Transverse colon (tissue), 4 donors: ENCODE measurements at regions of chrX and their contacts with region 1.

Region 1: DNA sequence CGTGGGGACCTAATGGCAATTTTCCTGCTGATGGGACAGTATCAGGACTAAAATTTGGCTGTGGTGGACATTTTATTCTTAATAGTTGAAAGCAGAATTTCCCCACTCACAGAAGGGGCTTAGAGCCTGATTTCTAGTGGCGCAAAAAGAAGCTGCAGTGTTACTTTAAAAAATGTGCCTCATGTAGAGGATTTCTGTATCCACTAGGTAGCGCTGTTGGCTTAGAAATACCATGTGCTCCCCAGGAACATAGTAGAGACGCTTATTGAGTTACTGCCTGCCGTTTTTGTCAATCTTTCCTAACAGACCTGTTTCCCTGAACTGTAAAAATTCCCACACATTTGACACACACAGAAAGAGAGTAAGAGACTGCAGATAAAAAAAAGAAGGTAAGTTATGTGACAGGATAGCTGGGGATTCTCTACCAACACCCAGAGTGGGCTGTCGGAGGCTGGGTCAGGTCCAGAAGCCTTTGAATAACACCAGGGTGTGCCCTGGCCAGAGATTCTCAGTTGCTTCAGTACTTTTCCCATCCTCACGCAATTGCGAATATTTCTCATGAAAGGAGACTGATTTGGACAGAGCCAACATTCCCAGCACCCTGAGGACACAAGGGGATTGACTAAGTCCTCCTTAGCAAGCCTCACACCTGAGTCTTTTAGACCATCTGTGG is 88.4 kb downstream of the ZXDA start:
- DNase-seq: peak; percentile 8
- H3K4me3 ChIP-seq: no peak overlapping the region
- H3K27ac ChIP-seq: no peak overlapping the region
- H3K4me1 ChIP-seq: no peaks in the 10 kb centered on the region
- H3K27me3 ChIP-seq: no peaks in the 10 kb centered on the region
- CTCF ChIP-seq: peak; percentile 48 to 69 (median 69)
- EP300 ChIP-seq: no peak
- POLR2A ChIP-seq: no peak

Region 2: DNA sequence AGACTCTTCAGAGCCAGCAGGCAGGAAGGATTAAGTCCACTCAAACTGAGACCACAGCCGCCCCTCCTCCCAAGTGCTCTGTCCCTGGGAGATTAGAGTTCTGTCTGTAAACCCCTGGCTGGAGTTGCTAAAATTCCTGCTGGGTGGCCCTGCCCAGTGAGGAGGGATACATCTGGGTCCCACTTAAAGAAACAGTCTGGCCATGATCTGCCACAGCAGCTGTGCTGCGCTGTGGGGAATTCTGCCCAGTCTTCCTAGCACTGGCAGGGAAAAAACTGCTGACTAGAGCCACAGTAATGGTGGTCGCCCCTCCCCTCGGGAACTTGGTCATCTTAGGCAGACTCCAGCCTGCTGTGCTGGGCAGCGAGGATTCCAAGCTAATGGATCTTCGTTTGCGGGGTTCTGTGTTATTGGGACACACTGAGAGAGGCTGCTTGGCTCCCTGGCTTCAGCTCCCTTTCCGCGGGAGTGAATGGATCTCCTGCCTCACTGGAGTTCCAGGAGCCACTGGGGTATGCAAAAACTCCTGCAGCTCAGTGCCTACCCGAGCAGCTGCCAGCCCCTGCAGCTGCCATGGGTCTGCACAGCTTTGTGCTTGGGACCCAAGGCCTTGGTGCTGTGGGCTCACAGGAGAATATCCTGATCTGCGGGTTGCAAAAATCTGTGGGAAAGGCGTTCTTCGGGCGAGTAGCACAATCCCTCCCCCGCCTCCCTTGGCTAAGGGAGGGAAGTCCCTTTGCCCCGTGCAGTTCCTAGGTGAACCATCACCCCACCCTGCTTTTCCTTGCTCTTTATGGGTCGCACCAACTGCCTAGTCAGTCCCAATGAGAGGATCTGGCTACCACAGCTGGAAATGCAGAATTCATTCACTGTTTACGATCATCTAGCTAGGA is 214.3 kb before region 1 on chrX:
- in situ Hi-C with region 1: no loop called
- intact Hi-C with region 1: no loop called
- DNase-seq: no peak
- H3K4me3 ChIP-seq: no peak overlapping the region
- H3K27ac ChIP-seq: no peak overlapping the region
- H3K4me1 ChIP-seq: no peaks in the 10 kb centered on the region
- H3K27me3 ChIP-seq: no peaks in the 10 kb centered on the region
- CTCF ChIP-seq: no peak
- EP300 ChIP-seq: no peak
- POLR2A ChIP-seq: no peak

Region 3: DNA sequence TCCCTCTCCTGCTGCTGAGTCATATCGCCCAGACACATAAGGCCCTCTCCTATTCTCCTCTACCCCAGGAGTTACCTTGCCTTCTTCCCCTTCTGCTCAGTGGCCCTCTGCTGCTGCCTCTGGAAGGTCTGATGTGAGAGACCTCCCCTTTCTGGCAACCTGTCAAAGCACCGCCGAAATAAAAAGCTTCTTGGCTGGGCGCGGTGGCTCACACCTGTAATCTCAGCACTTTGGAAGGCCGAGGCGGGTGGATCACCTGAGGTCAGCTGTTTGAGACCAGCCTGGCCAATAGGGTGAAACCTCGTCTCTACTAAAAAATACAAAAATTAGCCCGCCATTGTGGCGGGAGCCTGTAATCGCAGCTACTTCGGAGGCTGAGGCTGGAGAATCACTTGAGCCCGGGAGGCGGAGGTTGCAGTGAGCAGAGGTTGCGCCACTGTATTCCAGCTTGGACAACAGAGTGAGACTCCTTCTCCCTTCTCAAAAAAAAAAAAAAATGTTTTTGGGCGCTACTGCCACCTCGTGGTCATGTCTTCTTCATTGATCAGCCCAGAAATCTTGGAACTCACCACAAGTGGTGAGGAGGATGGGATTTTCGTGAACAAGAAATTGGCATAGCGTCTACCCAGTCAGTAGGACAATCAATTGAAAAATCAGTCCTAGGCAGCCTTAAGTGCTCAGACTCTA is 97.1 kb after region 1 on chrX:
- in situ Hi-C with region 1: loop called in 2 of 4 experiments (anchors 10 to 25 kb)
- intact Hi-C with region 1: loop called (anchors 5 kb)
- DNase-seq: peak; percentile 27
- H3K4me3 ChIP-seq: no peak overlapping the region
- H3K27ac ChIP-seq: no peak overlapping the region
- H3K4me1 ChIP-seq: no peaks in the 10 kb centered on the region
- H3K27me3 ChIP-seq: no peaks in the 10 kb centered on the region
- CTCF ChIP-seq: peak; percentile 28 to 53 (median 40)
- EP300 ChIP-seq: no peak
- POLR2A ChIP-seq: no peak

Region 4: DNA sequence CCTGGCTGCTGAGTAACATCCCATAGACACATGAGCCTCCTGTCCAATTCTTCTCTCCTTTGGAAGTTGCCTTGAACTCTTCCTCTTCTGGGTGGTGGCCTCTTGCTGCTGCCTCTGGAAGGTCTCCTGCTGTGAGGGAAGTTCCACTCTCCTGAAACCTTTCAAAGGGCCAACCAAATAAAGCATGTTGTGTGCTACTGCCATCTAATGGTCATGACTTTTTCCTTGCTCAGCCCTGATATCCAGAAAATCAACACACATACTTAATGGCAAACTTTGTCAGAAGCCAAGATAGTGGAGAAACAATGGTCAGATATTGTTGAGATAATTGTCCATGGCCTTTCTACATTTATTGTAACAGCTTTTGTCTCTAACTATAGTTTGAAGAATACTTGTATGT is 107.5 kb after region 1 on chrX:
- in situ Hi-C with region 1: loop called in 2 of 4 experiments (anchors 10 to 25 kb)
- intact Hi-C with region 1: loop called (anchors 5 kb)
- DNase-seq: no peak
- H3K4me3 ChIP-seq: no peak overlapping the region
- H3K27ac ChIP-seq: no peak overlapping the region
- H3K4me1 ChIP-seq: no peaks in the 10 kb centered on the region
- H3K27me3 ChIP-seq: no peaks in the 10 kb centered on the region
- CTCF ChIP-seq: peak in 3 of 5 experiments; percentile 11 to 17 (median 13)
- EP300 ChIP-seq: no peak
- POLR2A ChIP-seq: no peak

Region 5: GRCh38 chrX:58025979-58026378 is 204.1 kb after region 1 on chrX:
- in situ Hi-C with region 1: loop called in 1 of 4 experiments (anchors 25 kb)
- intact Hi-C with region 1: no loop called
- DNase-seq: peak; percentile 27
- H3K4me3 ChIP-seq: no peak overlapping the region
- H3K27ac ChIP-seq: no peak overlapping the region
- H3K4me1 ChIP-seq: no peaks in the 10 kb centered on the region
- H3K27me3 ChIP-seq: no peaks in the 10 kb centered on the region
- CTCF ChIP-seq: peak; percentile 9 to 50 (median 26)
- EP300 ChIP-seq: no peak
- POLR2A ChIP-seq: no peak